Thyroid gland (tissue), 4 donors: ENCODE measurements at regions of chr12 and their contacts with region 1.

Region 1: DNA sequence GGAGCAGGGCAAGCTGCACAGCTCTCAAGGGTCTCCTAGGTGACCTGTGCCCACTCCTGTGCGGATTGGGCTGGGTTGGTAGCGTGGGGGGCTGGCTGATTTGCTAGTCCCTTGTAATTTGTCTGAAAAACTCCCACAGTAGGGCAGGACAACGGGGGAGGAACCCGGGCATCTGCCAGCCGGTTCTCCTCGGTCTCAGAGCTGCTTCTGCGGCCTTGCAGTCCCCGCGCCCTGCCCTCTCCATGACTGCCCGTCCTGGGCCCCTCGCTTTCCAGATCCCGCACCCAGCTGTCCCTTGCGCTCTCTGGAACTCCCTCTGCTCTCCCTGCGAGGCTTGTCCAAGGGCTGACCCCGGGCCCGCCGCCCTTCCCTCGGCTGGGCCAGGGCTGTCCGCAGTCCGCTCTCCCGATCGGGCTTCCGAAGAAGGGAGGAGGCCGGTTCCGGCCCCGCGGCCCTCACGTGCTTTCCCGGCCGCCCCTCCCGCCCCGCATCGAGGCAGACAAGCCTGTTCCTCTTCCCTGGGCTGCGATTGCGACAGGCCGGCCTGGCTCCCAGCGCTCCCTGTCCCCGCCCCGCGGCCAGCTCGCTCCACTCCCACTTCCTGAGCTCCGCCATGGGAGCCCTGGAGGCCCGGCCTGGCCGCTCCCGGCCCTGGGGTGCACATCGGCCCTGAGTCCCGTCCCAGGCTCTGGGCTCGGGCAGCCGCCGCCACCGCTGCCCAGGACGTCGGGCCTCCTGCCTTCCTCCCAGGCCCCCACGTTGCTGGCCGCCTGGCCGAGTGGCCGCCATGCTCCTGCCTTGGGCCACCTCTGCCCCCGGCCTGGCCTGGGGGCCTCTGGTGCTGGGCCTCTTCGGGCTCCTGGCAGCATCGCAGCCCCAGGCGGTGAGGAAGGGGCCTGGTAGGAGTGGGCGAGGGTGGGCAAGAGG is at the start of gene LTBR:
- DNase-seq: peak; percentile 97 to 98
- H3K4me3 ChIP-seq: peak within 1 kb of the TSS; percentile 61 to 87 (median 68)
- H3K27ac ChIP-seq: peak within 1 kb of the TSS; percentile 97 to 99 (median 97)
- H3K4me1 ChIP-seq: peaks cover 30 to 60% of the 10 kb centered on the region in 2 donors
- H3K27me3 ChIP-seq: no peaks in the 10 kb centered on the region
- CTCF ChIP-seq: peak in 1 of 6 experiments; percentile 4
- POLR2A ChIP-seq: peak; percentile 40 to 97
- total RNA-seq, gene LTBR: 152 to 215 (median 178) TPM

Region 2: GRCh38 chr12:6167327-6168259 is 216.2 kb before region 1 on chr12:
- intact Hi-C with region 1: no loop called
- DNase-seq: no peak
- H3K4me3 ChIP-seq: no peak overlapping the region
- H3K27ac ChIP-seq: peak overlapping the region; percentile 42 to 79 (median 57)
- H3K4me1 ChIP-seq: peaks cover 0 to 16% of the 10 kb centered on the region in 2 donors
- H3K27me3 ChIP-seq: no peaks in the 10 kb centered on the region
- CTCF ChIP-seq: no peak
- POLR2A ChIP-seq: no peak

Region 3: DNA sequence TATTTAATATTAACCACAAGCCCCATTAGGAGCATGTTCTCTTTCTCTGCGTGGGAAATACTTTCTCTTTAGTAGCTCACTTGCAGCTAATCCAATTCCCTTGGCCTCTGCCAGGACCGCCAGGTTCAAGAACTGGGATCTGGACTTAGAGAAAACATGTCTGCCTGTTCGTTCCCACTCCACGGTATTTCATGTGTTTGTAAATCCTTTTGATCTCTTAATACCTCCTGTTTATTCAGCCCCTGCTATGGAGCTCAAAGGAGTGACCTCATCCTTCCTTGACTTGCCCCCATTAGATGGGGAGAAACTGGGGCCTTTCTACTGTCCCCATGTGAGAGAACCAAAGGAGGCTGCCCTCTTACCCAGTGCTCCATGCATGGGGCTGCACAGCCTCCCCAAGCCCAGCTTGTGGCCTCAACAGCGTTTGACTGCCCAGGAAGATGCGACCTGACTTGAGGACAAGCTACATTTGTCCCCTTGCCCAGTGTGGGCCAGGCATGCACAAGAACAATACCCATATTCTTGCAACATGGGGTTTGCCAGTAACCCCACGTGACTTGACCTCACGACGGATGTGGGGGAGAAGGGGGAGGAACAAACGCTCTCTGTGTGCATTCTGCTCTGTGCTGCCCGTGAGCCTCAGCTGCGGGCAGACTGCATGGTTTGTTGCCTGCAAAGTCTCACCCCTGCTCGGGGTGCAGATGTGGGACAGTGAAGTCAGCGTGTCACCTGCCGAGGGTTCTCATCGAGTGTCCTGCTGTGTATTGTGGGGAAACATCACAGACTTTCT is 153.3 kb before region 1 on chr12:
- intact Hi-C with region 1: loop called (anchors 10 kb)
- DNase-seq: peak; percentile 65 to 68
- H3K4me3 ChIP-seq: no peak overlapping the region
- H3K27ac ChIP-seq: peak overlapping the region; percentile 92 to 98 (median 92)
- H3K4me1 ChIP-seq: peaks cover 75 to 99% of the 10 kb centered on the region in 2 donors
- H3K27me3 ChIP-seq: no peaks in the 10 kb centered on the region
- CTCF ChIP-seq: no peak
- POLR2A ChIP-seq: peak in 1 of 2 donors; percentile 37

Region 4: DNA sequence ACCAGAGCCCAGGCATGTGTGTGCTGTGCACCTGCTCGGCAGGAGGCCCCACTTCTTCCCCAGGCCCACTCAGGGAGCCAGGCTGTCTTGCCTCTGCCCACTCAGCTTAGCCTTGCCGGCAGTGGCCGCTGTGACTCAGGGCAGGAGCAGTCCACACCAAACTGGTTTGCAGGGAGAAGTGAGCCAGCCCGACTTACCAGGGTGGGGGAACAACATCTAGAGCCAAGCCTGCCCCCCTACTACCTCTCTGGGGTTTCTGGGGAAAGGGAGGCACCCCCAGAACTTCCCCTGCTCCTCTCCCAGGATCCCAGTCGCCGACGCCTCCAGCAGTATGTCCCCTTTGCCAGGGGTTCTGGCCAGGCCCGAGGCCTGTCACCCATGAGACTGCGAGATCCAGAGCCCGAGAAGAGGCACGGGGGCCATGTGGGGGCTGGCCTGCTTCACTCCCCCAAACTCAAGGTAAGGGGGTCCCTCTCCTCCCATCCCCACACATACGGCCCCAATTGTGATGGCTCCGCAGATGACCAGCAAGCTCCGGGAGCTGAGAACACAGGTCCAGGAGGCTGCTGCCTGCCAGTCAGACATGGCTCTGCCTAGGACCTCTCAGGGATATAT is 70.4 kb before region 1 on chr12:
- intact Hi-C with region 1: no loop called
- DNase-seq: peak in 1 of 2 donors; percentile 66
- H3K4me3 ChIP-seq: no peak overlapping the region
- H3K27ac ChIP-seq: peak overlapping the region in 2 of 3 donors; percentile 23 to 64
- H3K4me1 ChIP-seq: peaks cover 10 to 39% of the 10 kb centered on the region in 2 donors
- H3K27me3 ChIP-seq: no peaks in the 10 kb centered on the region
- CTCF ChIP-seq: no peak
- POLR2A ChIP-seq: no peak

Region 5: GRCh38 chr12:6335451-6336078 is 48.3 kb before region 1 on chr12:
- intact Hi-C with region 1: loop called (anchors 5 kb)
- DNase-seq: peak; percentile 73
- H3K4me3 ChIP-seq: peak overlapping the region in 1 of 3 donors; percentile 95
- H3K27ac ChIP-seq: peak overlapping the region; percentile 98 to 100 (median 100)
- H3K4me1 ChIP-seq: peaks cover 49 to 75% of the 10 kb centered on the region in 2 donors
- H3K27me3 ChIP-seq: no peaks in the 10 kb centered on the region
- CTCF ChIP-seq: peak; percentile 9 to 59 (median 48)
- POLR2A ChIP-seq: no peak